ENCODE measurements at regions of chr22 and their contacts with region 1.

Region 1: DNA sequence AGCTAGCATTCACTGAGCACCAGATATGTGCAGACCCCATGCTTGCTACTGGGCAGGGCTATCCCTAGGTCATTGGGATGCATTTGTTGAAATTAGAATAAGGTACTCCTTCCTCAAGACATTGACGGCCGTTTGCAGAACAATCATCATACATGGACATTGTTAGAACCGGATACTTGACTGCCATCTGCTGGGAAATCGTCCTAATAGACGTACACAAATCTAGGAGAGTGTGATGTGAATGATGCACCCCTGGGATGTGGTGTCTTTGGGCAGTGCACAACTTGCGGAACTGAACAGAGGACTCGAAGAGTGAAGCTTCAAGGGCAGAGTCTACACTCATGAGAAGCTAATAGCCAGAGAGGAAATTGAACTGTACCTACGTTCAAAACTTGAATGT is 35.9 kb downstream of the MYO18B start:
- DNase-seq: peak; percentile 23
- H3K4me3 ChIP-seq: no peak overlapping the region
- H3K27ac ChIP-seq: no peak overlapping the region
- H3K4me1 ChIP-seq: no peaks in the 10 kb centered on the region
- H3K27me3 ChIP-seq: no peaks in the 10 kb centered on the region
- CTCF ChIP-seq: no peak

Region 2: GRCh38 chr22:25235547-25236290 is 542.2 kb before region 1 on chr22:
- intact Hi-C with region 1: loop called (anchors 5 kb)
- DNase-seq: peak; percentile 83
- H3K4me3 ChIP-seq: no peak overlapping the region
- H3K27ac ChIP-seq: no peak overlapping the region
- H3K4me1 ChIP-seq: no peaks in the 10 kb centered on the region
- H3K27me3 ChIP-seq: no peaks in the 10 kb centered on the region
- CTCF ChIP-seq: peak; percentile 38

Region 3: GRCh38 chr22:25362215-25362882 is 415.5 kb before region 1 on chr22:
- intact Hi-C with region 1: loop called (anchors 10 kb)
- DNase-seq: peak; percentile 75
- H3K4me3 ChIP-seq: no peak overlapping the region
- H3K27ac ChIP-seq: no peak overlapping the region
- H3K4me1 ChIP-seq: peaks cover 8% of the 10 kb centered on the region
- H3K27me3 ChIP-seq: no peaks in the 10 kb centered on the region
- CTCF ChIP-seq: peak; percentile 92

Measured in colonic mucosa (tissue), 4 donors.